GM10248 (cell line): ENCODE measurements at regions of chr6 and their contacts with region 1.

Region 1: DNA sequence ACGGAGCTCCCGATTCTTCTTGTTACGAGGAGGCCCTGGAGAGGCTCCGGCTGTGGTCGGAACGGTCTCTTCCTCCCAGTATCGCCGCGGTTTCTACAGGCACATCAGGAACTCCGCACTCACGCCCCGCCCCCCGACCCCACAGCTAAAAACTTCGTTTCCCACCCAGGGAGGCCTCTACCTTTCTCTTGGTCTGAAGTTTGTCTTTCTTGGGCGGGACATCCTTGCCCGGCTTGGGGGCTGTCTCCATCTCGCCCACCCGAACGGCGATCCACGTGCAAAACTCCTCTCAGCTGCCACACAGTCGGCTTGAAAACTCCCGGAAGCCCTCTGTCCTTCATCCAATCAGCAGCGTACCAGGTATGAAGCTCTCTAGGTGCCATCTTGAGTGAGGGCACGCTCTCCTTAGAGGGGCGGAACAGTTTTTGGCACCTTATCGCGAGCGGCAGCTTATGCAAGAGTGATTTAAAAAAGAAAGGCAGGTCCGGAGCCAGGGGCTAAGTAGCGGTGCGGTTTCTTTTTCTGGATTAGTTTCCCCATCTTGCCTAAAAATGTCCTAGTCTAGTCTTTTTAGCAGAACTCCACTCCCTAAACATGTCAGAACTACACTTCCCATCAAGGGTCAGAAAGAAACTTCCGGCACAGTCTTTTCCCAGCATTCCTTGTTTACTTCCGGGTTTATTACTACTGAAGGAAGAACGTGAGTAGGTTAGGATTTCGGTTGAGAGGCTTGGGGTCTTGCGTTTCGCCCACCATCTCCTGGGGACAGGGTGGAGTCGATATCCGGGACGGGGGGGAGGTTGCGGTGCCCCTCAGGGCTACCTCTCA is at the starts of genes PFDN6 and WDR46:
- DNase-seq: peak; percentile 94
- CTCF ChIP-seq: no peak

Region 2: GRCh38 chr6:33271458-33272274 is 17.5 kb before region 1 on chr6 and contains the starts of genes RPS18 and VPS52:
- CTCF ChIA-PET with region 1: interaction called, 37 read pairs
- POLR2A ChIA-PET with region 1: interaction called, 17 read pairs
- DNase-seq: peak; percentile 94
- CTCF ChIP-seq: no peak

Region 3: GRCh38 chr6:33431880-33432541 is 142.9 kb after region 1 on chr6:
- CTCF ChIA-PET with region 1: no interaction called
- POLR2A ChIA-PET with region 1: no interaction called
- DNase-seq: no peak
- CTCF ChIP-seq: no peak

Region 4: GRCh38 chr6:33751771-33752645 is 462.9 kb after region 1 on chr6:
- CTCF ChIA-PET with region 1: no interaction called
- POLR2A ChIA-PET with region 1: no interaction called
- DNase-seq: no peak
- CTCF ChIP-seq: no peak